ENCODE measurements at regions of chr3 and their contacts with region 1.

Region 1: GRCh38 chr3:111717601-111718000 is 122.5 kb upstream of the ZBED2 start:
- DNase-seq: peak; percentile 72
- H3K4me3 ChIP-seq: no peak overlapping the region
- H3K27ac ChIP-seq: no peak overlapping the region
- H3K27me3 ChIP-seq: no peaks in the 10 kb centered on the region
- CTCF ChIP-seq: peak; percentile 90

Region 2: GRCh38 chr3:111112913-111113312 is 604.7 kb before region 1 on chr3:
- CTCF ChIA-PET with region 1: no interaction called
- POLR2A ChIA-PET with region 1: no interaction called
- DNase-seq: no peak
- H3K4me3 ChIP-seq: no peak overlapping the region
- H3K27ac ChIP-seq: no peak overlapping the region
- H3K27me3 ChIP-seq: no peaks in the 10 kb centered on the region
- CTCF ChIP-seq: no peak

Region 3: GRCh38 chr3:111338059-111338698 is 379.4 kb before region 1 on chr3:
- CTCF ChIA-PET with region 1: no interaction called
- POLR2A ChIA-PET with region 1: no interaction called
- DNase-seq: peak; percentile 69
- H3K4me3 ChIP-seq: no peak overlapping the region
- H3K27ac ChIP-seq: no peak overlapping the region
- H3K27me3 ChIP-seq: no peaks in the 10 kb centered on the region
- CTCF ChIP-seq: peak; percentile 92

Region 4: DNA sequence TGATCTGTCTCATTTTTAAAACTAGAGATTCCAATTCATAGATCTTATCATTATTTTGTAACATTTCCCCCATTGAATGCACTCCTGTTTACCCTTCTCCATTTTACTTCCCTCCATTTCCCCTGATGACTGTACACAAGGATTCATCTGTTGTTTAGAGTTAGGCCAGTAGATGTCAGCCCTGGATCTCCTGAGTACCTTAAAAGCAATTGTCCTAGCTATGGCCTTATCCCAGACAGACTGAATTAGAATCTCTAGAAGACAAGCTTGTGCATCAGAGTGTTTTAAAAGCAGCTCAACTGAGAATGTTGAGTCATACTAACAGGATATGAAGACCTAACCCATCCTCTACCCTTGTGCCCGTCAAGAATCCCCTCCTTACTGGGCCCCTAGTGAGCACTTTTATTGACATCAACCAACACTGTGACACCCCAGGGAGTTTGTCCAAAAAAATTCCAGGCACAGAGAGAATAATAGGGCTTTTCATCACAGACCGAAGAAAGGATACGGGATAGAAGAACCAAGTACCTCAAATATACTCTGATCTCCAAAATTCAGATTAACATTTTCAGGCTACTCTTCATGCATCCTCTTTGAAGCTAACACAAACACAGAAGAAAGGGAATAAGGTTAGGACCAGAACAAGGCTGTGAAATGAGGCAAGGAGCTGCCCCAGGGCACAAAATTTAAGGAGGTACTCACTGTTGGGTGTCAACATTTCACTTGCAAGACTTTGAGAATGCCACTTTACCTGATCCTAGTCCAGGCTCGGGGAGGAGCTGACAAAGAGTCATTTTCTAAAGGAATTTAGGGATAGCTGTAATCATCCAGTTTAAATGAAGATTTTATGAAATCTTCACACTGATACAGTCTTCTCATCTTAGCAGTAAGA is 139.6 kb before region 1 on chr3:
- CTCF ChIA-PET with region 1: interaction called, 93 read pairs
- POLR2A ChIA-PET with region 1: no interaction called
- DNase-seq: peak; percentile 70
- H3K4me3 ChIP-seq: no peak overlapping the region
- H3K27ac ChIP-seq: no peak overlapping the region
- H3K27me3 ChIP-seq: no peaks in the 10 kb centered on the region
- CTCF ChIP-seq: peak; percentile 80

Region 5: GRCh38 chr3:111729087-111729846 is 11.7 kb after region 1 on chr3:
- CTCF ChIA-PET with region 1: interaction called, 13 read pairs
- POLR2A ChIA-PET with region 1: no interaction called
- DNase-seq: no peak
- H3K4me3 ChIP-seq: no peak overlapping the region
- H3K27ac ChIP-seq: no peak overlapping the region
- H3K27me3 ChIP-seq: no peaks in the 10 kb centered on the region
- CTCF ChIP-seq: no peak

Region 6: DNA sequence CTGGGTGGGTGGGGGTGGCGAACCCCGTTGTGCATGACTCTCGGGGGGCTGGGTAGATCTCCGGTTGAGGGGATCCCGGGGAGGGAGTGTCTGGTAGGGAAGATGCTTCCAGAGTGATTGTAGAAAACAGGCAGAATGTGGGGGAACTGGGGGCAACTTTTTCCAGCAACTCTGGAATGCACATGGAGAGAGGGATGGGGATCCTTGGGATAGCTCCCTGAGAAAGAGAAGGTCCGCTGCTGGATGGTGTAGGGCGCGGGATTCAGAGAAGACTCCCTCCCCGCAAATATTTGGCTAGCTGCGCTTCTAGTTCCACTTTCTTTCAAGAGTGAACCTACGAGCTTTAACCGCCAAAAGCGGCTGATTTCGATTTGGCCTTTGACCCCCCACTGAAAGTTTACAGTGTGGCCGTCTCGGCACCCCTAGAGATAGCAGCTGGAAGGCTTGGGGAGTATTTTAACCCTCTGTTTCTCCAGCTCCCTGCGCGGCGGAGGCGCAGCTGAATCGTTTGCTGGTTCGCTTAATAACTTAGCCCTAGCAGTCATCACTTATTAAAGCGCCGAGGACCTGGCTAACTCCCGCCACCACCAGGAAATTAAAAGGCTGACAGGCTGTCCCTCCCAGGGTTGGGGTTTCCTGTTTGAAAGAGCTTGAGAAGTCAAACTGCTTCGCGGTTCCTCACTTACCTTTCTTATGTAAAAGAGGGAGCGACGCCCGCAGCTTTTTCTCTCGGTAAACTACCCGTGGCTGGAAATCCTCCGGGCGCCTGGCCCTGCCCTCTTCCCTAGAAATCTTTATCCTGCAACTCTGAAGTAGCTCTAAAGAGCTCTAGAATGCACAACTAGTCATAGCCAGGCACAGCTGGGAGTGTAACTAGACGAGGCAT is 142.6 kb after region 1 on chr3:
- CTCF ChIA-PET with region 1: interaction called, 167 read pairs
- POLR2A ChIA-PET with region 1: interaction called, 8 read pairs
- DNase-seq: no peak
- H3K4me3 ChIP-seq: peak overlapping the region; percentile 78
- H3K27ac ChIP-seq: peak overlapping the region; percentile 95
- H3K27me3 ChIP-seq: no peaks in the 10 kb centered on the region
- CTCF ChIP-seq: peak; percentile 61

Region 7: DNA sequence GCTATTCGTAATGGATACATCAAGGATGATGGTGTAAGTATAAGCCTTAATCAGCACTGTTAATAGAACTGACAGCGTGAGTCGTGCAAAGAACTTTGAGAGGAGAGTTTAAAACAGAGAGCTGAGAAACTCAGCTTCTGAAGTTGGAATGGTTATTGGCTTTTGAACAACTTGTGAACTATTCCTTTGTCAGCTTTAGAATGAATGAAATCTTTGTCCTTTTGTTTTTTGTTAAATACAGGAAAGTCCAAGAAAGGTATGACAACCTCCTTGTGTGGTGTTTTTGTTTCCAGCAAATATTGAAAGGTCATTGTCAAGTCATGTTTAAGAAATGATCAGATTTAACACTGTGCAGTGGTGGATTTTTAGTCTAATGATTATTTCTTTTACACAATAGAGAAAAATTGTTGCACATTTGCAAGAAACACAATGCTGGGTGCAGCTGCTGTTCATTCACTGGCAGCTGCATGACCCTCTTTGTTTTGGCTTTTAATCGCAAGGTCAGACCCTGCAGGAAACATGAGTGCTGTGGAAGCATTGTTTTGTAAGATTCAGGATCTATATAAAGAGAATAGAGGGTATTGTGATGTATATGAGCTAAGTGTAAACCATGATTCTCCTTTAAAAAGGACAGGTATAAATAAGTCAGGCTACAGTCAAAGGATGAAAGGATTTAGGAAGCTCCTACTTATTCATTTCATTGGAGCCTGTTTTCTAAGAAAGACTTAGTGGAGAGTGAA is 239.6 kb after region 1 on chr3:
- CTCF ChIA-PET with region 1: interaction called, 276 read pairs
- POLR2A ChIA-PET with region 1: no interaction called
- DNase-seq: no peak
- H3K4me3 ChIP-seq: no peak overlapping the region
- H3K27ac ChIP-seq: no peak overlapping the region
- H3K27me3 ChIP-seq: no peaks in the 10 kb centered on the region
- CTCF ChIP-seq: no peak

Region 8: DNA sequence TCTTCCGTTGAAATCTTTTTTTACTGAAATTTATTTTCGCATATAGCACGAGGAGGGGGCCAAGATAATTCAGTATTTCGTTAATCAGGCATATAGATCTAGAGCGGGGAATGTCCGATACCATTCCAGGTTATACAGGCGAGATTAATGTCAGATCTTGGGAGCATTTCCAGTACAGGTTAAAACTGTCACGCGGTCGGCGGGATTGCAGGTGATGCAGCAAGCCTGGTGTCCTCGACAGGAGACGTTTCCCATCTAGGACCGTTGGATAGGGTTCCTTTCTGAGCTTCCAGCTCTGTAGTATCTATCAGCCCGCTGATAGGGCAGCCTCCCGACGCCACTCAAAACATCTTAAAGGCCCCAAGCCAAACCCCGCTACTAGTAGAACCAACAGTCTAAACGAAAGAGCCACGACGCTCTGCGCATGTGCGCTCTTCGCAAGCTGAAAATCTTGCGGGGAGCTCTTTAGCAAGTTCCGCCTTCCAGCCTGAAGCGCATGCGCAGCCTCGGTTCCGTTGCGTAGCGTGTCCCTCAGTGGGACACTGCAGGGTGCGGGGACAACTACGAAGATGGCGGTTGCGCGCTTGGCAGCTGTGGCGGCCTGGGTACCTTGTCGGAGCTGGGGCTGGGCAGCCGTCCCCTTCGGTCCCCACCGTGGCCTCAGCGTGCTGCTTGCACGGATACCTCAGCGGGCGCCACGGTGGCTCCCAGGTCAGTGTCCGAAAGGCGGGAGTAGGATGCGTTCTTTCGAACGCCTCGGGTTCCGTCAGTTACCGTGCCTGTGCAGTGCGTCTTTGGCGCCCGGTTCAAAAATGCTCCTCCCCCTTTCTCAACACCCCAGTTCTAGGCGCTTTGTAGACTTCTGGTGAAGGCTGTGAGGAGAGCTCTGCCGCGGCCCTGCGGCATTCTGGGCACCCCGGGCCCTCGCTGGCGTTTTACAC is 261.2 kb after region 1 on chr3 and contains the start of gene ABHD10:
- CTCF ChIA-PET with region 1: interaction called, 21 read pairs
- POLR2A ChIA-PET with region 1: no interaction called
- DNase-seq: peak; percentile 97
- H3K4me3 ChIP-seq: peak within 1 kb of the TSS; percentile 92
- H3K27ac ChIP-seq: peak within 1 kb of the TSS; percentile 47
- H3K27me3 ChIP-seq: no peaks in the 10 kb centered on the region
- CTCF ChIP-seq: no peak
- polyA plus RNA-seq, gene ABHD10: 28.8 and 37.5 TPM in 2 replicates

Region 9: DNA sequence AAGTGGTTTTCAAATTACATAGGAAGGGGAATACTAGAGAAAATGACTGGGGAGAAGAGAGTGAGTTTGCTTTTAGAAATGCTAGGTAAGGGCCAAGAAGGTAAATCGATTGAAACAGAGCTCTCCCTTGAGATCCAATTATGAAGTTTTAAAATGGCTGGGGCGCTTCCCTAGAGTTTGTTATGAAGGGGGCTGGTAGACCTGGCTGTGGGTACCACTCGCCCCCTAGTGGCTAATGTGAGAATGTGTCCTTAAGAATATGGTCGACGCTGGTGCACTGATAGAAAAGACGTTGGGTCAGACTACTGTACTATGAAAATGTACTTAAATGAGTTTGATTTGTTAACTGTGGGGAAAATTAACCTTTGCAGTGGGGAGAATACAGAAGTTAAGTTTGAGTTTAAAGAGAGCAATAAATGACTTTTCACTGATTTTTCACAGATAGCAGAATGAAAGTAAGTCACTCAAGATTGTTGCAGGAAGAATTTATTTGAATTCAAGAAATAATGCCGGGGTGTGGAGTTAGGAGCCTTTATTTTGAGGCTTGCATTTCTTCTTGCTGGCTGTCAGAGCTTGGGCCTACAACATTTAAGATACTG is 326.1 kb after region 1 on chr3:
- CTCF ChIA-PET with region 1: interaction called, 19 read pairs
- POLR2A ChIA-PET with region 1: no interaction called
- DNase-seq: peak; percentile 44
- H3K4me3 ChIP-seq: no peak overlapping the region
- H3K27ac ChIP-seq: no peak overlapping the region
- H3K27me3 ChIP-seq: no peaks in the 10 kb centered on the region
- CTCF ChIP-seq: peak; percentile 93